Motor neuron (in vitro differentiated cells): ENCODE measurements at regions of chr7 and their contacts with region 1.

Region 1: GRCh38 chr7:25259587-25260243 is 31.4 kb upstream of the NPVF start:
- ATAC-seq: peak; percentile 71 to 94 (median 86)
- H3K4me3 ChIP-seq: no peak overlapping the region
- H3K27ac ChIP-seq: no peak overlapping the region
- H3K4me1 ChIP-seq: peaks cover 6 to 34% of the 10 kb centered on the region in 2 donors

Region 2: GRCh38 chr7:25139536-25139935 is 120.2 kb before region 1 on chr7:
- in situ Hi-C with region 1: no loop called
- ATAC-seq: no peak
- H3K4me3 ChIP-seq: no peak overlapping the region
- H3K27ac ChIP-seq: no peak overlapping the region
- H3K4me1 ChIP-seq: no peaks in the 10 kb centered on the region

Region 3: GRCh38 chr7:25389489-25390106 is 129.9 kb after region 1 on chr7:
- in situ Hi-C with region 1: loop called (anchors 5 to 25 kb)
- ATAC-seq: peak; percentile 49 to 72 (median 56)
- H3K4me3 ChIP-seq: no peak overlapping the region
- H3K27ac ChIP-seq: no peak overlapping the region
- H3K4me1 ChIP-seq: peaks cover 0 to 15% of the 10 kb centered on the region in 2 donors

Region 4: GRCh38 chr7:25557379-25557917 is 297.7 kb after region 1 on chr7:
- in situ Hi-C with region 1: loop called in 7 of 9 experiments (anchors 10 to 25 kb)
- ATAC-seq: peak in 5 of 8 experiments; percentile 61 to 91 (median 89)
- H3K4me3 ChIP-seq: no peak overlapping the region
- H3K27ac ChIP-seq: peak overlapping the region; percentile 11 to 53
- H3K4me1 ChIP-seq: peaks cover 28 to 61% of the 10 kb centered on the region in 2 donors

Region 5: GRCh38 chr7:25565949-25566348 is 306.2 kb after region 1 on chr7:
- in situ Hi-C with region 1: loop called in 6 of 9 experiments (anchors 10 to 25 kb)
- ATAC-seq: no peak
- H3K4me3 ChIP-seq: no peak overlapping the region
- H3K27ac ChIP-seq: no peak overlapping the region
- H3K4me1 ChIP-seq: peaks cover 0 to 9% of the 10 kb centered on the region in 2 donors

Region 6: DNA sequence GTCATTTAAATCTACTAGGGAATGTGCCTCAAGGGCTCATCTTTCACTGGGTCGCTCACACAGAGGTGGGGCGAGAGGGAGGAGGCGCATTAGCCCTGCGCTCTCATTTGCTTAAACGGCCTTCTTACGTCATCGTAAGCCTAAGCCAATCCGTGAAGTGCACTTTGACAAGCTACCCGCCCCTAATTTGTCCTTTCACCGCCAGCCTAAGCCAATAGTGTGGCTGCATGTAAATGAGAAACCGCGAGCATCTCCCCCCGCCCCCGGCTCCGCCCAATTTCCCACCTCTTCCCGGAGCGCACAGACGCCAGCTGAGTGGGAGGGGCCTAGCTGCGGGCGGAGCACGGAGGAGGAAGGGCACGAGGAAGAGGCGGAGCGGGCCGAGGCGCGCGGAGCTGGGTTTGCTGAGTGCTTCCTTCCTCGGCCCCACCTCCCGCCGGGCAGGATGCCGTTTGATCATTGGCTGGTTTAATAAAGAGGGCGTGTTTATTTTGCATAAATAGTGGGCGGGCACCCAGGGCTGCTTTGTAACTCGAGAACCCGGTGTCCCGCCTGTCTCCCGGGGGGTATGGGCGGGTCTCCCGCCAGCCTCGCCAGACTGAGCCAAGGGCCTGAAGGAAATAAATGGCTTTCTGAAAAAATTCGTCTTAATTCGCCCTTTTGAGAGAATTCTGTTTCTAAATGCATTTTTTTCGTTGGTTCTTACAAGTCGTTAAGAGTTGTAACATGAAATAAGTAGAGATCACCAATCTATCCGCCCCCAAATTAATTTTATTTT is 602.7 kb after region 1 on chr7:
- in situ Hi-C with region 1: loop called in 4 of 9 experiments (anchors 10 to 25 kb)
- ATAC-seq: peak; percentile 86 to 93 (median 92)
- H3K4me3 ChIP-seq: peak overlapping the region; percentile 7 to 25 (median 14)
- H3K27ac ChIP-seq: no peak overlapping the region
- H3K4me1 ChIP-seq: peaks cover 0 to 2% of the 10 kb centered on the region in 2 donors